ENCODE measurements at regions of chr7 and their contacts with region 1.

Region 1: GRCh38 chr7:3065724-3066143 is 22.1 kb upstream of the CARD11 start:
- DNase-seq: peak; percentile 81
- H3K4me3 Mint-ChIP-seq: peak overlapping the region; percentile 7
- H3K27ac Mint-ChIP-seq: peak overlapping the region; percentile 53
- H3K4me1 Mint-ChIP-seq: peaks cover 88% of the 10 kb centered on the region
- H3K27me3 Mint-ChIP-seq: no peaks in the 10 kb centered on the region

Region 2: DNA sequence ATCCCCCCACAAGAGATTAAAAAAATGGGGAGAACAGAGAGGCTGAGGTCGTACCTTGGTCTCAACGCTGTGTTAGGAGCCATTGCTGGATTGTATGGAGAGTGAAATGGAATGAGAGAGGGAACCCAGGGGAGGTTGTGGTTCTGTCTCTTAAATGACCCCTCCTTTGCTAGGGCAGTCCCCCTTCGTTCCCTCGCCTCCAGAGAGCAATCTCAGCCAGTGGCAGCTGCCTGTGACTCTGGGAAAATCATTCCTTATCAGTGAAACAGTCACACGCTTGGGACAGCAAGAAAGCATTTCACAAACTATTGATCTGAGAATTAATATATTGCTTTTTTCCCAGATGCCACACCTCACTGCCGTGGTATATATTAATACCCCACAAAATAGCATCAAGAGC is 10.1 kb before region 1 on chr7:
- CTCF ChIA-PET with region 1: interaction called, 21 read pairs
- POLR2A ChIA-PET with region 1: interaction called, 3 read pairs
- DNase-seq: no peak
- H3K4me3 Mint-ChIP-seq: no peak overlapping the region
- H3K27ac Mint-ChIP-seq: no peak overlapping the region
- H3K4me1 Mint-ChIP-seq: peaks cover 7% of the 10 kb centered on the region
- H3K27me3 Mint-ChIP-seq: peaks cover 20% of the 10 kb centered on the region

Region 3: GRCh38 chr7:3106361-3106826 is 40.7 kb after region 1 on chr7:
- CTCF ChIA-PET with region 1: interaction called, 13 read pairs
- POLR2A ChIA-PET with region 1: interaction called, 31 read pairs
- DNase-seq: peak; percentile 71
- H3K4me3 Mint-ChIP-seq: peak overlapping the region; percentile 22
- H3K27ac Mint-ChIP-seq: peak overlapping the region; percentile 99
- H3K4me1 Mint-ChIP-seq: peaks cover 93% of the 10 kb centered on the region
- H3K27me3 Mint-ChIP-seq: no peaks in the 10 kb centered on the region

Region 4: DNA sequence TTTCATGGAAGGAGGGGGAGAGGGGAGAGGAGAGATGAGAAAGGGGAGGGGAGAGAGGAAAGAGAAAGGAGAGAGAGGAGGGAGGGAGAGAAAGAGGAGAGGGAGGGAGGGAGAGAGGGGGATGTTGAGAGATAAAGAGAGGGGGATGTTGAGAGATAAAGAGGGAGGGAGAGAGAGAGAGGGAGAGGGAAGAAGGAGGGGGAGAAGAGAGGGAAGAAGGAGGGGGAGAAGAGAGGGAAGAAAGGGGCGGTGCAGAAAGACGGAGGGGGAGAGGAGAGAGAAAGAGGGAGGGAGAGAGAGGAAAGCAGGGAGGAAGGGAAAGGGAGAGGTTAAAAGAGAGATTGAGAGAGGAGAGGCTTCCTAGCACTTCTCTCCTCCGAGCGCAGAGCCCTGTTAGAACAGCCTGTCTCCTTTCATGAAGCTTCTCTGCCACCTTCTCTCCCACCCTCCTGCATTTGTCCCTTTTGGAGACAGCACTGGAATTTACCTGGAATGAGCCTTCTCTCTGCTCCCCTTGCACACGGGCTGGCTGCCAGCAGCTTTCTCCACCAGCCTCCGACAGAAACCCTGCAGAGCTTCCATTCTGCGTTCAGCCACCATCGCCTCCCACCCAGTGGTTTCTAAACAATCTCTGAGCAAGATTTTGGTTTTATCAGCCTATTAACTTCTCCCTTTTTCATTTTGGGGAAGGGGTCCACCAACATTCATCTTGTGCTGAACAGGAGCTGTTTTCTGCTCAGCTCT is 51.9 kb after region 1 on chr7:
- CTCF ChIA-PET with region 1: interaction called, 11 read pairs
- POLR2A ChIA-PET with region 1: interaction called, 11 read pairs
- DNase-seq: peak; percentile 57
- H3K4me3 Mint-ChIP-seq: peak overlapping the region; percentile 90
- H3K27ac Mint-ChIP-seq: peak overlapping the region; percentile 94
- H3K4me1 Mint-ChIP-seq: peaks cover 87% of the 10 kb centered on the region
- H3K27me3 Mint-ChIP-seq: peaks cover 3% of the 10 kb centered on the region

Measured in activated CD4-positive, alpha-beta memory T cell treated with anti-CD3 and anti-CD28 coated beads, Interleukin-2, amount 10 ng/mL, durations not matched to agents 7 days and 5 days (primary cell).